Left colon (tissue), 2 donors: ENCODE measurements at regions of chr5 and their contacts with region 1.

Region 1: GRCh38 chr5:1140171-1140817 is 28.4 kb upstream of the SLC12A7 start:
- DNase-seq: peak; percentile 79 to 90
- ATAC-seq: peak; percentile 89

Region 2: GRCh38 chr5:923281-923873 is 216.9 kb before region 1 on chr5:
- intact Hi-C with region 1: loop called (anchors 10 kb)
- DNase-seq: peak; percentile 71 to 88
- ATAC-seq: peak; percentile 93

Region 3: DNA sequence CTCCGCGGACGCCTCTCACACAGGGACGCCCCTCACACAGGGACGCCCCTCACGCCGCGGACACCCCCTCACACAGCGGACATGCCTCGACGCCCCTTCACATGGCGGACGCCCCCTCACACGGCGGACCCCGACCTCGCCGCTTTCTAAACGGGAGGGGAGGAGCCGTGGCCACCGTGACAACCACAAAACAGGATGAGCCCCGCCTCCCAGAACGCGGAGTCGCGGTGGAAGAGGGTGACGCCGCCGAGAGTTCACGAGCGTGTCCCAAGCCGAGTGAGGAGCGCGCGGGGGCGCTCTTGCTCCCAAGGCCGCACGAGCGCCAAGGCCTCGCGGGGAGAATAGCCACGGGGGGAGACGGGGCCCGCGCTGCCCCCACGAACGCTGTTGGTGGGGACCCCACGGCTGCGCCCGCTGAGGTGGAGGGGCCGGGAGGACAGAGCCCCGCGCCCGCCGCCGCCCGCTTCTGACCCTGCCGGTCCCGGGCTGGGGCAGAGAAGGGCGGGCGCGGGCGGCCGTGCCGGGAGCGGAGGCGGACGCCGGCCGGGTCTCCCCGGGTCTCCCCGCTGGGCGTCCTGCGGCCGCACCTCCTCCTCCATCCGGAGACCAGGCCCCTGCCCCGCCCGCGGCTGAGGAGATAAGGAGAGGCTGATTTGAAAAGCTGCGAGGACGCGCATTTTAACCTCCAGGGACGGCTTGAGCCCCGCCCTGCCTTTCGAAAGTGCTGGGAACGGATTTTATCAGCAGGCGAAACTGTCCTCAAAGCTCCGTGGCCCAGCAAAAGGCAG is 135.6 kb before region 1 on chr5:
- intact Hi-C with region 1: loop called in 1 of 2 experiments (anchors 10 kb)
- DNase-seq: peak; percentile 67 to 75
- ATAC-seq: peak; percentile 67

Region 4: GRCh38 chr5:1246711-1247431 is 106.6 kb after region 1 on chr5:
- intact Hi-C with region 1: no loop called
- DNase-seq: peak in 1 of 2 donors; percentile 70
- ATAC-seq: peak; percentile 53